WTC11 (cell line): ENCODE measurements at regions of chr2 and their contacts with region 1.

Region 1: GRCh38 chr2:168494190-168494711 is 38.2 kb downstream of the CERS6 start:
- DNase-seq: peak; percentile 49
- ATAC-seq: peak; percentile 86
- H3K4me3 Mint-ChIP-seq: no peak overlapping the region
- H3K27ac Mint-ChIP-seq: no peak overlapping the region
- H3K4me1 Mint-ChIP-seq: peaks cover 35% of the 10 kb centered on the region
- H3K27me3 Mint-ChIP-seq: no peaks in the 10 kb centered on the region; the same call in 1 of the 2 replicates
- CTCF ChIP-seq: peak; percentile 32; the same call in 1 of the 2 replicates

Region 2: GRCh38 chr2:168480354-168480753 is 13.9 kb before region 1 on chr2:
- CTCF ChIA-PET with region 1: interaction called, 29 read pairs
- POLR2A ChIA-PET with region 1: no interaction called
- DNase-seq: no peak
- ATAC-seq: no peak
- H3K4me3 Mint-ChIP-seq: no peak overlapping the region
- H3K27ac Mint-ChIP-seq: no peak overlapping the region
- H3K4me1 Mint-ChIP-seq: peaks cover 58% of the 10 kb centered on the region
- H3K27me3 Mint-ChIP-seq: no peaks in the 10 kb centered on the region
- CTCF ChIP-seq: no peak

Region 3: DNA sequence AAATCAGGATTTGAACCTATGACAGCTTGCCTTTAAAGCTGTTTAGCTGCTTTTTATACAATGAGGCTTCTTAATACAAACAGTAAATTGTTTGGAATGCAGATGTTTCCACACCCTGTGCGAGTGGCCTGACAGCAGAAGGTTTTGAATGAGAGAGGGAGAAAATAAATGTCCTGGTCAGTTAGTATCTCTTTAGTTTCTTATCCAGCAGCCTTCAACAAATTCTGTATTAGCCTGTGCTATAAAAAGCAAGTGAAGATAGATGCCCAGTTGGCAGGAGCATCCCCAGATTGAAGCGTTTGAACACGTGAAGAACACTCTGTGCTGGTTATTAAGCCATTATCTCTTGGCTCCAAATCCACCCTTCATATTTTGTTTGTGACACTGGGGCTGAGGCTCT is 32.4 kb after region 1 on chr2:
- CTCF ChIA-PET with region 1: interaction called, 10 read pairs
- POLR2A ChIA-PET with region 1: no interaction called
- DNase-seq: no peak
- ATAC-seq: no peak
- H3K4me3 Mint-ChIP-seq: no peak overlapping the region
- H3K27ac Mint-ChIP-seq: no peak overlapping the region
- H3K4me1 Mint-ChIP-seq: peaks cover 43% of the 10 kb centered on the region
- H3K27me3 Mint-ChIP-seq: no peaks in the 10 kb centered on the region
- CTCF ChIP-seq: no peak